Activated B cell treated with CpG ODN at 0.5 μM for 24 hours (primary cell): ENCODE measurements at regions of chr2 and their contacts with region 1.

Region 1: GRCh38 chr2:207529330-207530159 is at the start of gene CREB1:
- DNase-seq: peak; percentile 100
- ATAC-seq: peak; percentile 80
- H3K4me3 Mint-ChIP-seq: peak within 1 kb of the TSS; percentile 95
- H3K27ac Mint-ChIP-seq: peak within 1 kb of the TSS; percentile 100
- H3K4me1 Mint-ChIP-seq: peaks cover 74% of the 10 kb centered on the region
- H3K27me3 Mint-ChIP-seq: no peaks in the 10 kb centered on the region
- CTCF ChIP-seq: no peak
- total RNA-seq, gene CREB1: 112 and 127 TPM in 2 replicates

Region 2: GRCh38 chr2:205706769-205707381 is 1822.7 kb before region 1 on chr2:
- CTCF ChIA-PET with region 1: no interaction called
- POLR2A ChIA-PET with region 1: interaction called, 17 read pairs
- intact Hi-C with region 1: loop called (anchors 10 kb)
- DNase-seq: peak; percentile 60
- ATAC-seq: peak; percentile 95
- H3K4me3 Mint-ChIP-seq: peak overlapping the region; percentile 65
- H3K27ac Mint-ChIP-seq: peak overlapping the region; percentile 99
- H3K4me1 Mint-ChIP-seq: peaks cover 63% of the 10 kb centered on the region
- H3K27me3 Mint-ChIP-seq: no peaks in the 10 kb centered on the region
- CTCF ChIP-seq: no peak

Region 3: GRCh38 chr2:206274434-206275268 is 1254.9 kb before region 1 on chr2 and contains the start of gene ZDBF2:
- CTCF ChIA-PET with region 1: no interaction called
- POLR2A ChIA-PET with region 1: no interaction called
- intact Hi-C with region 1: no loop called
- DNase-seq: peak; percentile 58
- ATAC-seq: peak; percentile 86
- H3K4me3 Mint-ChIP-seq: peak within 1 kb of the TSS; percentile 84
- H3K27ac Mint-ChIP-seq: peak within 1 kb of the TSS; percentile 69
- H3K4me1 Mint-ChIP-seq: peaks cover 18% of the 10 kb centered on the region
- H3K27me3 Mint-ChIP-seq: peaks cover 43% of the 10 kb centered on the region
- CTCF ChIP-seq: no peak
- total RNA-seq, gene ZDBF2: 6.7 and 8.0 TPM in 2 replicates

Region 4: DNA sequence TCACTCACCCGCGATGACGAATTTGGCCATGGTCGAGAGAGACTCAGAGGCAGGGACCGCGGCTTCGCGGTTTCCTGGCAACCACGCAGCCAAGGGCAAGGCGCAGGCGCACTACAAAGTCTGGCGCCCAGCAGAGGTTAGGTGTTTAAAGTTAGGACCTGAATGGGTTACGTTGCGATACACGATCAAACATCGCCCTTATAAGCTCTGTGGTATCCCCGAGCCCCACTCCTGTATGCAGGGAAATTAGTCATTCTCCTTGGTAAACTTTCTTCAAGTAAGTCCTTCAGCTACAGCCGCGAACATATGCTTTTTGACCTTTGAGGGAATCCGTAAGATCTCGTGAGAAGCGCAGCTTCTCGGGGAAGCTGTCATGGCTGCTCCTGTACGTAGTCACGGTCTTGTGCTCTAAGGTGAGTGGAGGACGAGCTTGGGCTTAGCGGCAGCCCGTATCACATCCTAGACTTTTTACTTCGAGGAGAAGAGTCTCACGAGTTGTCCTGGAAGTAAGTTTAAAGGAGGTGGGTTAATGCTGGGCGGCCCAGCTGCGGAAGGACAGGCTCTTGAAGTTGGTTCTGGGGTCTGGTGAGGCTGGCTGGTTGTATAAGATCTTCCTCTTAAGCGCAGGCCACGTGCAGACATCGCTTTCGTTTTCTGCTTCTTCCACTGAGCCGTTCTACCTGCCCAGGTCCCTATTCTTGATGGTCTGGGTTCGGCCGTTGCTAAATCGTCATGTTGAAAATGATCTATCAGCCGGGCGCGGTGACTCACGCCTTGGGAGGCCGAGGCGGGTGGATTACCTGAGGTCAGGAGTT is 764.1 kb before region 1 on chr2 and contains the starts of genes FASTKD2 and MDH1B:
- CTCF ChIA-PET with region 1: no interaction called
- POLR2A ChIA-PET with region 1: interaction called, 12 read pairs
- intact Hi-C with region 1: loop called (anchors 1 kb)
- DNase-seq: peak; percentile 77
- ATAC-seq: peak; percentile 87
- H3K4me3 Mint-ChIP-seq: peak within 1 kb of the TSS; percentile 94
- H3K27ac Mint-ChIP-seq: peak within 1 kb of the TSS; percentile 96
- H3K4me1 Mint-ChIP-seq: peaks cover 34% of the 10 kb centered on the region
- H3K27me3 Mint-ChIP-seq: peaks cover 3% of the 10 kb centered on the region
- CTCF ChIP-seq: no peak
- total RNA-seq, gene FASTKD2: 29.1 and 29.6 TPM in 2 replicates
- total RNA-seq, gene MDH1B: not detected in 2 replicates

Region 5: DNA sequence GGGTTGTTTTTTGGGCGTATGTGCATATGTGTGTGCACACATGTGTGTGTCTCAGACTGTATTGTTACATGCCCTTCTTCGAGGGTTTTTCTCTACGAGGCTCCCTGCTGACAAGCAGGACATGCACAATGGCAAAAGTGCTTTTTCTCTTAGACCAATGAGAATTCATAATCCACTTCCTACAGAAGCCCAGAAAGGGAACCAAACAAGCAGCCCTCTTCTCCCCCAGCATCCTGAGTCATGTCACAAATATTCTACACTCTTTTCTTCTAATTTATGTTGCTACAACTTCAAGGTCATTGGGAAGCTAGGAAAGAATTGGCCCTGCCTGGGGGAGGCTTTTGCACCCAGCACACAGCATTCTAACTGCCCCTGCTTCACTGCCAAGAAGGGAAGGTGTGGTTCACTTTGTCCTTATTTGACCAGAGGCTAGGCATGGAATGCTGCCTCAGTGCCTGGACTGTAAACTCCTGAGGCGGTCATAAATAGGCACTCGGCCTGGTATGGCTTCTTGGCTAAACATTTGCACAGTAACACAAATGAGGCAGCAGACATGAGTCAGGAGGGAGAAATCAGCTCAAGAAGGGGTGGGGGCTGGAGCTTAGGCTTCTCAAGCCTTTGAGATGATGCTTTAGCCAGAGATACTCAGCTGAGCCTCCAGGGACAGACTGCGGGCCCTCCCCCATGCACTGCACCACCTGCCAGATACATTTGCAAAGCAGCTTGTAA is 271.1 kb before region 1 on chr2:
- CTCF ChIA-PET with region 1: no interaction called
- POLR2A ChIA-PET with region 1: no interaction called
- intact Hi-C with region 1: no loop called
- DNase-seq: no peak
- ATAC-seq: no peak
- H3K4me3 Mint-ChIP-seq: no peak overlapping the region
- H3K27ac Mint-ChIP-seq: no peak overlapping the region
- H3K4me1 Mint-ChIP-seq: peaks cover 11% of the 10 kb centered on the region
- H3K27me3 Mint-ChIP-seq: peaks cover 9% of the 10 kb centered on the region
- CTCF ChIP-seq: no peak

Region 6: GRCh38 chr2:207484444-207485391 is 44.8 kb before region 1 on chr2:
- CTCF ChIA-PET with region 1: no interaction called
- POLR2A ChIA-PET with region 1: interaction called, 12 read pairs
- intact Hi-C with region 1: loop called (anchors 2 kb)
- DNase-seq: no peak
- ATAC-seq: peak; percentile 93
- H3K4me3 Mint-ChIP-seq: peak overlapping the region; percentile 20
- H3K27ac Mint-ChIP-seq: peak overlapping the region; percentile 68
- H3K4me1 Mint-ChIP-seq: peaks cover 31% of the 10 kb centered on the region
- H3K27me3 Mint-ChIP-seq: no peaks in the 10 kb centered on the region
- CTCF ChIP-seq: no peak

Region 7: GRCh38 chr2:207571370-207571769 is 41.8 kb after region 1 on chr2:
- CTCF ChIA-PET with region 1: no interaction called
- POLR2A ChIA-PET with region 1: interaction called, 5 read pairs
- intact Hi-C with region 1: loop called (anchors 5 kb)
- DNase-seq: no peak
- ATAC-seq: no peak
- H3K4me3 Mint-ChIP-seq: no peak overlapping the region
- H3K27ac Mint-ChIP-seq: no peak overlapping the region
- H3K4me1 Mint-ChIP-seq: peaks cover 8% of the 10 kb centered on the region
- H3K27me3 Mint-ChIP-seq: no peaks in the 10 kb centered on the region
- CTCF ChIP-seq: no peak

Region 8: GRCh38 chr2:207710814-207711740 is 181.5 kb after region 1 on chr2 and contains the start of gene CCNYL1:
- CTCF ChIA-PET with region 1: no interaction called
- POLR2A ChIA-PET with region 1: interaction called, 14 read pairs
- intact Hi-C with region 1: loop called (anchors 1 kb)
- DNase-seq: peak; percentile 92
- ATAC-seq: peak; percentile 95
- H3K4me3 Mint-ChIP-seq: peak within 1 kb of the TSS; percentile 95
- H3K27ac Mint-ChIP-seq: peak within 1 kb of the TSS; percentile 85
- H3K4me1 Mint-ChIP-seq: peaks cover 23% of the 10 kb centered on the region
- H3K27me3 Mint-ChIP-seq: no peaks in the 10 kb centered on the region
- CTCF ChIP-seq: no peak
- total RNA-seq, gene CCNYL1: 12.2 and 13.5 TPM in 2 replicates